ENCODE measurements at regions of chr15 and their contacts with region 1.

Region 1: DNA sequence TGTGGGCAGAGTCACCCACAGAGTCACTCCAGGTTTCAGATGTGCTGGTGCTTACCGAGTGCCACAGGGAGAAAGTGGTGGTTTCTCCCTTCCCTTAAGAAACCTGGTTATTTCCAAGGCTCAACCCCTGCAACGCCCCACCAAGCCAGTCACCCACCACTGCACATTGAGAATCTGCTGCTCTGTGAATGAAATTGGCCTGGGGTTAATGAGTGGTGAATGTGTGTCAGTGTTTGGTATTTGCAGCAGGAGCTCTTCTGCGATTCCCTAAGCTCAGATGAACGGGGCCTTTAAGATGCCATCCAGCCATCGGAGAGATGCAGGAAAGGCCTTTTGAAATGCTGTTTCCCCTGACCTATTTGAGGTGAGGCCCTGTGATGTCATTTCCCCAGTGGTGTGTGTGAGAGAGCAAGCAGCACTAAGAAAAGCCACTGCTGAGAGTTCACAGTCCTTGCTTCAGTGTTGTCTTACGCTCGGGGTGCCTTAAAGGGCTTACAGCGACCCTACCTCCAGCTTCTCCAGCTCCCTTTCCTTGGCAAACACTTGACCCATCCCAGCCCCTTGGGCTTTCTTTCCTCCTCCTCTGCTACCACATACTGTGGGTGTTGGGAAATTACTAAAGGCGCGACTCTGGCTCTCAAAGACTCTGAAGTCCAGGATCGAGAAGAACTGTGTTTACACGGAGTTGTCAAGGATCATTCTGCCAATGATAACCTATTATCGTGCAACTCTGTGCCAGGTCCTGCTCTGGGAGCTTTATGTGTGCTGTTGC is 68.9 kb downstream of the SMAD3 start:
- DNase-seq: peak; percentile 84
- ATAC-seq: peak; percentile 92
- H3K4me3 Mint-ChIP-seq: peak overlapping the region; percentile 65
- H3K27ac Mint-ChIP-seq: peak overlapping the region; percentile 90
- H3K4me1 Mint-ChIP-seq: peaks cover 81% of the 10 kb centered on the region
- H3K27me3 Mint-ChIP-seq: no peaks in the 10 kb centered on the region
- CTCF ChIP-seq: no peak

Region 2: DNA sequence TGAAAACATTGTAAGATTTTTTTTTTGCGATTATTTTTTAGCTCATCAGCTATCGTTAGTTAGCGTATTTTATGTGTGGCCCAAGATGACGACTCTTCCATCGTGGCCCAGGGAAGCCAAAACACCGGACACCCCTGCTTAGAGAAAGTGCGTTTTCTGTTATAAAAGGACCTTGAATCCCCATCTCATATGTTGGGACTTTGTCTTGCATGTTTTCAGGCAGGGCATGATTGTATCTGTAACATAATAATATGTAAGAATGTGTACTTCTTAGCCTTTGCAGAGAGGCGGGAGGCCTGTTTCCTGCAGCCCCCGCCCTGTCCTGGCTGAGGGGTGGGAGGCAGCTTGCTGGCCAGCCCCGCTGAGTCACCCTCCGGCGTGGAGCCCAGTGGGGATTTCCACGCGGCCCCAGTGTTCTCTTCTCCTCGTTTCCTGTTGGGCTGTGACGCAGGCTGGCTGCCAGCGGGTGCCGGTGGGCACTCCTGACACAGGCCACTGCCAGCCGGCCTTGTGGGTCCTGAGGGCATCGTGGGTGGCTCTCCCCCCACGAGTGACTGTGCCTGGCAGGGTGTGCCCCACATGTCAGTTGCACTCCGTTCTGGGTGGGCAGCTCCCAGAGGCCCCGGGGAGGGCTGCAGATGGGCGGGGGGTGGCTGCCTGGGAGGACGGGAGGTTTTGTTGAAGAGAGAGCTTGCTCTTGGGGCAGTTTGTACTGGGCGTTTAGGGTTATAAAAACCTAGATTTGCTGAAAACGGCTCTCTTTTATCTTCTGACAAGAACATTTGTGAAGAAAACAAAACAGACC is 13.2 kb before region 1 on chr15:
- CTCF ChIA-PET with region 1: interaction called, 4 read pairs
- POLR2A ChIA-PET with region 1: interaction called, 41 read pairs
- intact Hi-C with region 1: no loop called
- DNase-seq: peak; percentile 93
- ATAC-seq: peak; percentile 94
- H3K4me3 Mint-ChIP-seq: peak overlapping the region; percentile 65
- H3K27ac Mint-ChIP-seq: peak overlapping the region; percentile 97
- H3K4me1 Mint-ChIP-seq: peaks cover 76% of the 10 kb centered on the region
- H3K27me3 Mint-ChIP-seq: no peaks in the 10 kb centered on the region
- CTCF ChIP-seq: no peak

Measured in activated CD8-positive, alpha-beta T cell treated with anti-CD3 and anti-CD28 coated beads for 36 hours (primary cell).